Heart left ventricle (tissue), 16 donors: ENCODE measurements at regions of chr2 and their contacts with region 1.

Region 1: DNA sequence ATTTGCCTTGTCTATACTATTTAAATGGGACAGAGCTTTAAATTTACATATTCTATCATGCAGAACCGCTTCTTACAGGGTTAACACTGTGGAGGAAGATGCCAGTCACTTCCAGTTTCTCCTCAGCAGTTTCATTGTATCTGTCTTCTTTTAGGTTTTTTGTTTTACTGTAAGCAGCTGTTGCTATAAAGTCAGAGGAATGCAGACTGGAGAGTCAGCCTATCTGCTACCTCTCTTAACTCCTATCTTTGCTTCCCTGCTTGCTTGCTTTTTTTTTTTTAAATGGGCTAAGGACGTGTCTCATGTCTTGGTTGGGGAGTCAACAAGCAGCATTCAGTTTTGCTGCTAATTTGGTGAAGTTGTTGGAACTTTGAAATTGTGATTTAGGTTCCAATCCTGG is 8.9 kb downstream of the EPC2 start:
- DNase-seq: no peak
- ATAC-seq: peak in 2 of 4 donors; percentile 11 to 13
- H3K4me3 ChIP-seq: no peak overlapping the region
- H3K27ac ChIP-seq: no peak overlapping the region
- H3K4me1 ChIP-seq: peaks cover 4 to 90% (median 62%) of the 10 kb centered on the region in 12 donors
- H3K27me3 ChIP-seq: no peaks in the 10 kb centered on the region
- CTCF ChIP-seq: no peak
- POLR2A ChIP-seq: no peak

Region 2: GRCh38 chr2:147657086-147658000 is 996.1 kb before region 1 on chr2:
- intact Hi-C with region 1: no loop called
- DNase-seq: no peak
- ATAC-seq: no peak
- H3K4me3 ChIP-seq: no peak overlapping the region
- H3K27ac ChIP-seq: no peak overlapping the region
- H3K4me1 ChIP-seq: no peaks in the 10 kb centered on the region
- H3K27me3 ChIP-seq: no peaks in the 10 kb centered on the region
- CTCF ChIP-seq: no peak
- POLR2A ChIP-seq: no peak

Region 3: GRCh38 chr2:148634749-148635148 is 18.7 kb before region 1 on chr2:
- intact Hi-C with region 1: no loop called
- DNase-seq: no peak
- ATAC-seq: no peak
- H3K4me3 ChIP-seq: no peak overlapping the region
- H3K27ac ChIP-seq: no peak overlapping the region
- H3K4me1 ChIP-seq: no peaks in the 10 kb centered on the region
- H3K27me3 ChIP-seq: no peaks in the 10 kb centered on the region
- CTCF ChIP-seq: no peak
- POLR2A ChIP-seq: no peak

Region 4: GRCh38 chr2:148720501-148721001 is 67.1 kb after region 1 on chr2:
- intact Hi-C with region 1: loop called in 1 of 10 experiments (anchors 5 kb)
- DNase-seq: peak in 4 of 5 donors; percentile 12 to 51 (median 32)
- ATAC-seq: peak; percentile 65 to 80 (median 78)
- H3K4me3 ChIP-seq: peak overlapping the region in 8 of 12 donors; percentile 3 to 36 (median 26)
- H3K27ac ChIP-seq: peak overlapping the region in 3 of 12 donors; percentile 20 to 39 (median 22)
- H3K4me1 ChIP-seq: peaks cover 0 to 60% (median 32%) of the 10 kb centered on the region in 12 donors
- H3K27me3 ChIP-seq: no peaks in the 10 kb centered on the region
- CTCF ChIP-seq: no peak
- POLR2A ChIP-seq: no peak